ENCODE measurements at regions of chr13 and their contacts with region 1.

Region 1: DNA sequence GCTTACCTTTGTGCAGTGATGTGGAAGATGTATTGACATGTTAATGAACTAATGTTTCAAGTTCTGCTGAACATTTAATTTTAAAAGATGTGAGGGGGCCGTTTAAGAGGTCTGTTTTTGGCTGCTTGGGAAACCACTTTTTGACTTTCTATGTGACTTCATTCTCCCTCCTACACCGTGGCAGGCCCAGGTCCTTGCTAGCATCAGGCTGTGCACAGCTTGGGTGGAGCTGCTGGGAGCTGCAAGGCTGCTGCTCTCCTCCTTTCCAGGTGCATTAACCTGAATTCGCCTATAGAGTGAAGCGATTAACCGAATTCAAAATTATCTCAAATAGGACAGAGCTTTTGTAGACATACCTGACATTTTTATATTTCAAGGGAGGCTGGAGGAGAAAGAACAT is 249.1 kb downstream of the FGF14 start:
- DNase-seq: no peak
- H3K4me3 Mint-ChIP-seq: no peak overlapping the region
- H3K27ac Mint-ChIP-seq: no peak overlapping the region
- H3K4me1 Mint-ChIP-seq: no peaks in the 10 kb centered on the region
- H3K27me3 Mint-ChIP-seq: no peaks in the 10 kb centered on the region

Region 2: DNA sequence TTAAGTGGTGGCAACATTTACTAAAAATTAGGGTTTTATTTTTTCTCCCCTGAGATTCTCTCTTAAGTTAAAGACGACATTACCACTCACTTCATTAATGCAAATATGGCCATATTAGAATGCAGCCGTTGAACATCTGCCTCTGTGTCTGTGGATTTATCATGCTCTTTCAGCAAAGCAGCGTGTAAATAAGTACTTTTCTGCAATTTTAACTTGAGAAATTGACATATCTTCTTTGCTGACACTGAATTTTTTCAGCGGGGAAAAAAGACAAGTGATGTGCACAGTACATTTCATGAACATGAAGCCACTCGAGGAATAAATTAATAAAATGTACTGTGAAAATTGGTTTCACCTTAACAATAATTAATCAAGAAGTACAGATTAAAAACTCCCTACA is 293.9 kb before region 1 on chr13:
- CTCF ChIA-PET with region 1: no interaction called
- intact Hi-C with region 1: no loop called
- DNase-seq: no peak
- H3K4me3 Mint-ChIP-seq: no peak overlapping the region
- H3K27ac Mint-ChIP-seq: no peak overlapping the region
- H3K4me1 Mint-ChIP-seq: no peaks in the 10 kb centered on the region
- H3K27me3 Mint-ChIP-seq: peaks cover 2% of the 10 kb centered on the region

Region 3: DNA sequence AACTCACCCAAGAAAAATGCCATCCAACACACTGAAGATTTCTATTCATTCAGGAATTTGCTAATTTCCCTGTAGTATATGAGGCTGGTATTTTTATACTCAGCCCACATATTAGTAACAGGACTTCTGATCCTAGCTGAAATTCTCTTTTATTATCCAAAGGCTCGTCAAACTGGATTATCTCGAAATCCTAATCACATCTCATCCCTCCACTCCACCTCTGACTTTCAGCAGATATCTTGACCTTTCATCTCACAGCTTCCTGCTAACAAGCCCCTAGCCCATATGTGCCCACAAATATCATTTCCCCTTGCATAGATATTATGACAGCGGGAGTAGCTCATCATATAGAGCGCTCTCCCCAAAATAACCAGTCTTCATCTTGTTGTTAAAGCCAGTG is 30.6 kb before region 1 on chr13:
- CTCF ChIA-PET with region 1: no interaction called
- intact Hi-C with region 1: loop called (anchors 2 kb)
- DNase-seq: no peak
- H3K4me3 Mint-ChIP-seq: no peak overlapping the region
- H3K27ac Mint-ChIP-seq: no peak overlapping the region
- H3K4me1 Mint-ChIP-seq: no peaks in the 10 kb centered on the region
- H3K27me3 Mint-ChIP-seq: peaks cover 4% of the 10 kb centered on the region

Region 4: DNA sequence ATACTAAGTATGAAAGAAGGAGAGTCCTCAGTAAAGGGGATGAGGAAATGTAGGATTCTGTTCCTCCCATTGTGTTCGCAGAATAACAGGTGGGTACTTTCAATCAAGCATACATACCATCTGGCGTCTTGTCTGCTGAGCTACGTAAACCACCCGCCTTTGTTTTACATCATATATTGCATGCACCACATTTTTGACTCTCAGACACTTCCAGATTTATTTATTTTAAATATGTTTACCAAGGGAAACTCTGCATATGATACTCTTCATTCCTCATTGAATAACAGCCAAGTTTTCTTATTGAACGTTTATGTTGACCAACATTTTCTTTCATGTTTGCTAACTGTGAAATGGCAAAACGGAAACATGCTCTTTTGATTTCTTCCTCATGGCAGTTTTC is 75.0 kb after region 1 on chr13:
- CTCF ChIA-PET with region 1: no interaction called
- intact Hi-C with region 1: no loop called
- DNase-seq: no peak
- H3K4me3 Mint-ChIP-seq: no peak overlapping the region
- H3K27ac Mint-ChIP-seq: no peak overlapping the region
- H3K4me1 Mint-ChIP-seq: no peaks in the 10 kb centered on the region
- H3K27me3 Mint-ChIP-seq: peaks cover 3% of the 10 kb centered on the region

Measured in activated naive CD4-positive, alpha-beta T cell treated with anti-CD3 and anti-CD28 coated beads for 36 hours (primary cell).